Activated CD8-positive, alpha-beta T cell treated with anti-CD3 and anti-CD28 coated beads for 36 hours (primary cell): ENCODE measurements at regions of chr6 and their contacts with region 1.

Region 1: DNA sequence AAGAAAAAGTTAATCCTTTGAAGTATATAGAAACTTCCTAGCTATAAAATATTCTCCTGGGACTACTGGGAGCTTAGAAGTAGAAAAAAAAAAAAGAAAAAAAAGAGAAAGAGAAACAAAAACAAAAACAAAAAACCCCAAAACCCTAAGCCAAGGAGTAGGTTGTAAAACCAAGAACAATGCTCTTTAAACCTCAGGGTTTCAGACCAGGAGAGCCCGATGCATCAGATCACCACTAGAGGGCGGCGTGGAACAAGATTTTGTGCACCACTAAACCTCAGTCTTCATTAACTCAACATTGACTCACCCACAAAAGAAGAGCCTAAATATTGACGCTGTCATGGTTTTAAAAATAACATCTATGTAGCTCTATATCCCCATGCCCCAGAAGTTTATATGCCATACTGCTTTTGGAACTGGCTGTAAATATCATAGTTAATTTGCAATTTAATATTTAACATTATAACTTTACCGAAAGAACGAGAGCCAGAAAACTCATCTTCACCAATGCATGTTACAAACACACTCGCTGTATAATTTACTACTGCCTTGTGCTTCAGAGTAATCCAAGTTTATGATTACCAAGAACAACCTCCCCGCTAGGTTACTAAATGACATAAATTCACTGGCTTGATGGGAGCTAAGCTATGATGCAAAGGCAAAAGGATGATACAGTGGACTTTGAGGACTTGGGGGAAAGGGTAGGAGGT is 19.2 kb downstream of the MCUR1 start:
- DNase-seq: peak; percentile 95
- ATAC-seq: peak; percentile 97
- H3K4me3 Mint-ChIP-seq: no peak overlapping the region
- H3K27ac Mint-ChIP-seq: peak overlapping the region; percentile 38
- H3K4me1 Mint-ChIP-seq: peaks cover 17% of the 10 kb centered on the region
- H3K27me3 Mint-ChIP-seq: no peaks in the 10 kb centered on the region
- CTCF ChIP-seq: peak; percentile 89

Region 2: GRCh38 chr6:13807696-13808095 is 12.5 kb after region 1 on chr6:
- CTCF ChIA-PET with region 1: interaction called, 43 read pairs
- POLR2A ChIA-PET with region 1: interaction called, 5 read pairs
- intact Hi-C with region 1: no loop called
- DNase-seq: no peak
- ATAC-seq: no peak
- H3K4me3 Mint-ChIP-seq: no peak overlapping the region
- H3K27ac Mint-ChIP-seq: no peak overlapping the region
- H3K4me1 Mint-ChIP-seq: peaks cover 23% of the 10 kb centered on the region
- H3K27me3 Mint-ChIP-seq: no peaks in the 10 kb centered on the region
- CTCF ChIP-seq: no peak

Region 3: GRCh38 chr6:13814176-13814937 is 19.2 kb after region 1 on chr6 and contains the start of gene MCUR1:
- CTCF ChIA-PET with region 1: interaction called, 43 read pairs
- POLR2A ChIA-PET with region 1: interaction called, 4 read pairs
- intact Hi-C with region 1: no loop called
- DNase-seq: peak; percentile 87
- ATAC-seq: peak; percentile 89
- H3K4me3 Mint-ChIP-seq: peak within 1 kb of the TSS; percentile 86
- H3K27ac Mint-ChIP-seq: peak within 1 kb of the TSS; percentile 86
- H3K4me1 Mint-ChIP-seq: peaks cover 28% of the 10 kb centered on the region
- H3K27me3 Mint-ChIP-seq: peaks cover 3% of the 10 kb centered on the region
- CTCF ChIP-seq: no peak
- total RNA-seq, gene MCUR1: 34.8 to 38.0 TPM